ENCODE measurements at regions of chr3 and their contacts with region 1.

Region 1: DNA sequence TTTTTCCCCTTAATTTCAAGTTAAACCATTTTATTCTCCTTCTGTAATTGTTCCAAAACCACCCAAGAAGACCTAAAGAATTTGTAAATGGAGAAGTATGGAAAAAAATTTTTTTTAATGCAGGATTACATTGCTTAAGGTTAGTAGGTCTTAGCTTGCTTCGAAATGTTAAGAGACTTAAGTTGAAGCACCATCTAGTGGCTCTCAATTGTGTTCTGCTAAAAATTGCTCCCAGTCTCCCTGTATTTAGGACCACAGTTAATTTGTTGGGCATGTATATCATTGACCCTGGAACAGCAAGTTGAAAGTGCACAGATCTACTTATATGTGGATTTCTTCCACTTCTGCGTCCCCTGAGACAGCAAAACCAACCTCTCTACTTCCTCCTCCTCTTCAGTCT is 32.4 kb downstream of the CD200R1L start:
- DNase-seq: no peak
- ATAC-seq: peak; percentile 32

Region 2: GRCh38 chr3:112642912-112643506 is 171.3 kb before region 1 on chr3:
- intact Hi-C with region 1: loop called (anchors 5 kb)
- DNase-seq: peak; percentile 78
- ATAC-seq: peak; percentile 83

Region 3: GRCh38 chr3:112744825-112745566 is 69.3 kb before region 1 on chr3:
- intact Hi-C with region 1: loop called (anchors 5 kb)
- DNase-seq: no peak
- ATAC-seq: peak; percentile 93

Region 4: DNA sequence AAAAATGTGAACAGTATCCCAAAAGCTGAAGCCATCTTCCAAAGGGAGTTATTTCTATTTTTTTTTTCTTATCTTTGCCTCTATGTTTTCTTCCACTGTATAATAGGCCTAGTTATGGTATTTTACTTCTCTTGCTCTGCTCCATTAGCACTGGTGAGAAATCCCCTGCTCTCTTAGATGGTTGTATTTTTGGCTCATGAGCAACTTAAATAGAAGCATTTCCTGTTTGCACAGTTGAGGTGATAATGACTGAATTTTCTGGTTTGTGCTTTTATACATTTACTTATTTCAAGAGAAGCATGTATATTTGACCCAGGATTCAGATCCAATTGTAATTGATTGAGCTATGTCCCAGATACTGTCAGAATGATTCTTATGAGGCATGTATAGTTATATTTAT is 94.0 kb after region 1 on chr3:
- intact Hi-C with region 1: no loop called
- DNase-seq: no peak
- ATAC-seq: no peak